ENCODE measurements at regions of chr3 and their contacts with region 1.

Region 1: DNA sequence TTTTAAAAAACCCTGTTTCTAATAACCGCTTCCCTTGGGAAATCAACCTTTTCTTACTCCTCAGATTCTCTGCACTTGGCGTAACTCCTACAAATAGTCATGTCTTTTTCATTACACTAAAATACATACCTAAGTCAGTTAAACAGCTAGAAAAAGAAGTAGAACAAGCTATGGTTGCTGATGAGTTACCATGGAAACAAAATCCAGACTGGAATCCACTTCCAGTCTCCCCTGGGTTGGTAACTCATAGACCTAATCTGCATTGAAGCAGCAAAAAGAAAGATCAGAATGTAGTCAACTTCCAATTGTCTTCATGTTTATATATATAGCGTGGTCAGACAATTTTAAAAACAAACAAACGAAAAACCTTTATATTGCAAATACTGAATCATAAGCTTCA is 260.8 kb upstream of the LRRN1 start:
- DNase-seq: no peak
- H3K4me3 ChIP-seq: no peak overlapping the region
- CTCF ChIP-seq: no peak
- POLR2A ChIP-seq: no peak

Region 2: DNA sequence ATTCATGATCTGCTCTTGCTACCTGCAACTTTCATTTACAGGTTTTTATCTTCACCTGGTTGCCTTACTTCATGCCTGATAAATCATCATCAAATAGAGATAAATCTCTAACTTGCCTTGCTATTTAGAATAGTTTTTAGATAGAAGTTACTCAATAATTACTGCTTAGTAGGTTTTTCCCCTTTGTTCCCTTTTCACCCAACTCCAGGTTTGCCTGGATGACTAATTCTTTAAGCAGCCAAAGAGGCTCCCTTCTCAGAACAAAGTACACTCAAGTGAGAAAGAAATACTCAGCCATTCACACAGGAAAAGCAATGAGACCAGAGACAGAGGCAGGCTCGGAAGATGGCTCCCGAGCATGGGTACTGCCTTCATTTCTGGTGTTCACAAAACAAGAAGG is 90.8 kb before region 1 on chr3:
- intact Hi-C with region 1: no loop called
- DNase-seq: no peak
- H3K4me3 ChIP-seq: no peak overlapping the region
- CTCF ChIP-seq: no peak
- POLR2A ChIP-seq: no peak

Region 3: GRCh38 chr3:4678320-4678719 is 1139.9 kb after region 1 on chr3:
- intact Hi-C with region 1: loop called (anchors 5 kb)
- DNase-seq: no peak
- H3K4me3 ChIP-seq: no peak overlapping the region
- CTCF ChIP-seq: no peak
- POLR2A ChIP-seq: no peak

Measured in lower leg skin (tissue), 4 donors.